Activated CD4-positive, alpha-beta T cell treated with anti-CD3 and anti-CD28 coated beads for 36 hours (primary cell): ENCODE measurements at regions of chr1 and their contacts with region 1.

Region 1: GRCh38 chr1:172883107-172883791 is 167.5 kb downstream of the TNFSF18 start:
- DNase-seq: peak; percentile 25
- ATAC-seq: peak; percentile 83
- H3K4me3 Mint-ChIP-seq: no peak overlapping the region
- H3K27ac Mint-ChIP-seq: peak overlapping the region; percentile 38
- H3K4me1 Mint-ChIP-seq: peaks cover 14% of the 10 kb centered on the region
- H3K27me3 Mint-ChIP-seq: peaks cover 45% of the 10 kb centered on the region

Region 2: DNA sequence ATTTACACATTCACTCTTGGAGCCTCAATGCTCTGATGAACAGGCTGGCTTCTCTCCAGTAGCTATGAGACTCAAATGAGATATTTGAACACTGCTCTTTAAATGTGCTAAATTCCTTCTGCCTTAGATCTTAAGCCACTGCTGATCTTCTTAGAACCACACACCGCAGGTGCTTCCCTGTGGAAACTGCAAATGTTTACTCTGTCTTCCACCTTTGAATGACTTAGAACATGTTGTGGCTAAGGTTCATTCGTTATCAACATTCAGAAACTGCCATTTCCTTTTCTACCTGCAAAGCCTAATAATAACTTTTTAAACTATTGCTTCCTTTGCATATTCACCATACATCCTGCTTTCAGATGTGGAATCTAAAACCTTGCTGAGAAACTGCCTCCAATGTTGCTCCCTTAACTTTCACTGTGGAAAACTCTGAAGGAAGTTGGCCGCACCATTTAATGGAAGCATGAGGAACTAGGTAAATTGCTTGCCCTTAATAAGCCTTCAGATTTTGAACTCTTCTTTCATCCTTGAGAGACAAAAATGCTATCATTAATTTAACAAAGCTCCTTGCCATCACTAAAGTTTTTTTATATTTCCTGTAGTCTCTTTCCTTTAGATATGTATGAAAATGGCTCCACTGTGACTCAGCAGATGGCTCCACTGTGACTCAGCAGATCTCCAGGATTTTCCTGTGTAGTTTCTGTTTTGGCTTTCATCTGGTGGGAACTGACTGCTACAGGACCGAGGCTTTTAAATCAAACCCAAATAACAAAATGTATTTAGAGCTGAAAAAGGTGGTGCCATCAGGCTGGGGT is 23.7 kb after region 1 on chr1:
- CTCF ChIA-PET with region 1: no interaction called
- POLR2A ChIA-PET with region 1: no interaction called
- intact Hi-C with region 1: no loop called
- DNase-seq: peak; percentile 12
- ATAC-seq: peak; percentile 47
- H3K4me3 Mint-ChIP-seq: no peak overlapping the region
- H3K27ac Mint-ChIP-seq: no peak overlapping the region
- H3K4me1 Mint-ChIP-seq: peaks cover 21% of the 10 kb centered on the region
- H3K27me3 Mint-ChIP-seq: peaks cover 7% of the 10 kb centered on the region

Region 3: GRCh38 chr1:172931761-172932160 is 48.5 kb after region 1 on chr1:
- CTCF ChIA-PET with region 1: no interaction called
- POLR2A ChIA-PET with region 1: no interaction called
- intact Hi-C with region 1: loop called in 1 of 2 experiments (anchors 5 kb)
- DNase-seq: no peak
- ATAC-seq: no peak
- H3K4me3 Mint-ChIP-seq: no peak overlapping the region
- H3K27ac Mint-ChIP-seq: no peak overlapping the region
- H3K4me1 Mint-ChIP-seq: peaks cover 12% of the 10 kb centered on the region
- H3K27me3 Mint-ChIP-seq: peaks cover 2% of the 10 kb centered on the region